ENCODE measurements at regions of chr7 and their contacts with region 1.

Region 1: DNA sequence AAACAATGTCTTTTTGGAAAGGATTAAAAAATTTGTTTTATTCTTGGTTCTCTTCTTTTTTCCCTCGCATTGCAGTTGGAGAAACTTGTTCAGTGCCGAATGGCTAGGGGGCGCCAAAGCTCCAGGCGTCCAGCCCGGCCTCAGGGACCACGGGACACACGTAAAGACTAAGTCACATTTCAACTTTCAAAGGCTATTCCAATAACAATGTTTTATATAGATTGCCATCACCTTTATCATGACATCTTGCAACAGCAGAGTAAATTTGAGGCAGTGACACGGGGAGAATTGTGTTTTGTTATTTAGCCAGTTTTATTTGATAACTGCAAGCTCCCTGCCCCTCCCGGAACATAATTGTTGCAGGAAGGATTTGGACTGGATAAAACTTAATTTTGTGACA is 2.2 kb upstream of the IGFBP3 start:
- DNase-seq: no peak
- H3K4me3 ChIP-seq: no peak overlapping the region
- H3K27me3 ChIP-seq: no peaks in the 10 kb centered on the region
- CTCF ChIP-seq: peak; percentile 97

Region 2: DNA sequence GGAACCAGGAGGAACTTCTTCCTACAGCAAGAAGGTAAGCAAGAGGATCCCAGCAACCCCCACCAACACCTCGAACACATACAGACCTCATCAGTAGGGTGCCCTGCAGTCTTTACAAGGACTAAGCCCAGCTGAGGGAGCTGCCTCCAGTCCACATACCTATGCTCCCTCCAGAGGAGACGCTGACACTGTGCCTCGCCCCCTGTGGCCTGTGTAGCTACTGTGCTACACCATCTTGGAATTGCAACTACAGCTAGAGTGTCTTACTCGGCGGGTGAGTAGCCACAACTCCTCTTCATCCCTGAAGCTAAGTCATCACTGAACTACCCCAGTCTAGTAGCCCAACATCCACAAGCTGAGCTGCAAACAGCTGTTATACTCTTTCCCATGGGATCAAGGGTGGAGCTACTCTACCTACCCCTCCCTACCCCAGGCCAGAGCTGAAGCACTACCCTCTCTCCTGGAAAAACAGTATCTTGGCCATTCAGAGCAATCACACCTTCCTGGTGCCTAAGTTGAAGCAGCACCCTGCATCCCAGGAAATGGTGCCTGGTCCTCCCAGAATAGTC is 1555.7 kb before region 1 on chr7:
- CTCF ChIA-PET with region 1: no interaction called
- POLR2A ChIA-PET with region 1: no interaction called
- DNase-seq: no peak
- H3K4me3 ChIP-seq: no peak overlapping the region
- H3K27me3 ChIP-seq: no peaks in the 10 kb centered on the region
- CTCF ChIP-seq: no peak

Region 3: GRCh38 chr7:45938626-45939302 is 15.5 kb after region 1 on chr7:
- CTCF ChIA-PET with region 1: interaction called, 18 read pairs
- POLR2A ChIA-PET with region 1: no interaction called
- DNase-seq: no peak
- H3K4me3 ChIP-seq: no peak overlapping the region
- H3K27me3 ChIP-seq: no peaks in the 10 kb centered on the region
- CTCF ChIP-seq: no peak

Region 4: DNA sequence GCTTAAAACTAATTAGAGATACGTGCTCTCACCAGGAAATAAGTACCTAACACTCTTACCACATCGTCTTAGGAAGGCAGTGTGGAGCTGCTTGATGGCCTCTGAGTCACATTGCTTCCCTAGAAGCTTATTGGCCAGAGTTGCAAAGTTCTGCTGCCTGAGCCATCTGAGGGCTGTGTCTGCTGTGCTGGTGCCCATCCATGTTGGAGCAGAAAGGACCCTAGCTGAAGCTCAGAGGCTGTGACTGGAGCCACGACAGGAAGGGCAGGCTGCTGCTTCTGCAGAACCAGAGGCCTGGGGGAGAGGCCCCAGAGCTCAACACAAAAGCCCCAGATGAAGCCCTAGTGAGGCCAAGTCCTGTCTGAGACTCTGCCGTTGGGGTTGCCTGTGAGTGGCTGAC is 62.6 kb after region 1 on chr7:
- CTCF ChIA-PET with region 1: interaction called, 15 read pairs
- POLR2A ChIA-PET with region 1: no interaction called
- DNase-seq: no peak
- H3K4me3 ChIP-seq: no peak overlapping the region
- H3K27me3 ChIP-seq: no peaks in the 10 kb centered on the region
- CTCF ChIP-seq: no peak

Region 5: DNA sequence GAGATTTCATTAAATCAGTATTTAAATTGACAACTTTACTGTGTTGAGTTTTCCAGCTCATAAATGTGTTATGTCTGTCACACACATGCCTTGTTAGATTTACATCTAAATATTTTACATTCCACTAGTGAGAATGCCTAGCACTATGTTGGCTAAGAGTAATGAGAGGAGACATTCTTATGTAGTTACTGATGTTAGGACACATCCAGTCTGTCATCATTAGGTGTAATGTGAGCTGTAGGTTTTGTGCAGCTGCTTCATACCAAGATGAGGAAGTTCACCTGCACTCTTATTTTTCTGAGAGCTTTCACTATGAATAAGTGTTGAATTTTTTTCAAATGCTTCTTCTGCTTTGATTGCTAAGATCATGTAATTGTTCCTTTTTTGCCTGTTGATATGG is 215.8 kb after region 1 on chr7:
- CTCF ChIA-PET with region 1: interaction called, 19 read pairs
- POLR2A ChIA-PET with region 1: no interaction called
- DNase-seq: peak; percentile 66
- H3K4me3 ChIP-seq: no peak overlapping the region
- H3K27me3 ChIP-seq: no peaks in the 10 kb centered on the region
- CTCF ChIP-seq: no peak

Region 6: DNA sequence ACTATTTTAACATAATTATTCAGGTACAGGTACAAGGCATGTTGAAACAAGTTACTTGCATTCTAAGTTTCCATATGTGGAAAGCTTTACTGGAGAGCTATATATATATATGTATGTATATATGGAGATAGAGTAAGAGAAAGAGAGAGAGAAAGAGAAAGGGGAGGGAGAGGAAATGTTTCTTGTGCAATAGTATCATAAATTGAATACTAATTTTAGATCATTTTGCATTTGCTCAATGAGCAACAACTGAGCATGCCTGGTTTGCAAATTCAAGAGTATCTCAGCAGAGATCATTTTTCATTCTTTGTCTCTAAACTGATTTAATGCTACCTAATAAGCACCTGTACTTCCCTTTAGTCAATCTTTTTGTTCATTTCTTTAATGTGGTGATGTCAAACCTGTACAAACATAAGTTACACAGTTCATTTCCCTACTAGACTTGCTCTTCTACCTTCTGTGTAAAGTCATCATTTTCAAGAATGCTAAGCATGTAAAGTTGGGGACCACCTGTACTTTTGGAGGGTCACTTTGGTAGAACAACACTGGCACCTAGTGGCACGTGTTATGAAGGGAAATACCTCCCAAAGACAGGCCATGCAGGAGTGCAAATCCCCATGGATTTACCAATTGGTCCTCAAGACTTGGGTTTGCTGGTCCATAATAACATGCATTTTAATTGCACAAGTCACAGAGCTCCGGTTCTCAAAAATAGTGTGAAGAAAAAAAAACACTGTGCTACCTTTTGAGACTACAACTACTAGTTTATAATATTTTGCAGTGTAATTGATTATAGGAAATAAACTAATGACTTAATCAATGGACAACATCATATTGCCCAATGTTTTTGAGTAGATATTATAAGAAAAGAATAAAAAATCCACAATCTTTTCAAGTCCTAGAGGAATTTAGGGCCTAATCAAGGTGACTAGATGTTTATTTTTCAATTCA is 429.0 kb after region 1 on chr7:
- CTCF ChIA-PET with region 1: interaction called, 61 read pairs
- POLR2A ChIA-PET with region 1: no interaction called
- DNase-seq: peak; percentile 12
- H3K4me3 ChIP-seq: no peak overlapping the region
- H3K27me3 ChIP-seq: no peaks in the 10 kb centered on the region
- CTCF ChIP-seq: peak; percentile 62

Region 7: DNA sequence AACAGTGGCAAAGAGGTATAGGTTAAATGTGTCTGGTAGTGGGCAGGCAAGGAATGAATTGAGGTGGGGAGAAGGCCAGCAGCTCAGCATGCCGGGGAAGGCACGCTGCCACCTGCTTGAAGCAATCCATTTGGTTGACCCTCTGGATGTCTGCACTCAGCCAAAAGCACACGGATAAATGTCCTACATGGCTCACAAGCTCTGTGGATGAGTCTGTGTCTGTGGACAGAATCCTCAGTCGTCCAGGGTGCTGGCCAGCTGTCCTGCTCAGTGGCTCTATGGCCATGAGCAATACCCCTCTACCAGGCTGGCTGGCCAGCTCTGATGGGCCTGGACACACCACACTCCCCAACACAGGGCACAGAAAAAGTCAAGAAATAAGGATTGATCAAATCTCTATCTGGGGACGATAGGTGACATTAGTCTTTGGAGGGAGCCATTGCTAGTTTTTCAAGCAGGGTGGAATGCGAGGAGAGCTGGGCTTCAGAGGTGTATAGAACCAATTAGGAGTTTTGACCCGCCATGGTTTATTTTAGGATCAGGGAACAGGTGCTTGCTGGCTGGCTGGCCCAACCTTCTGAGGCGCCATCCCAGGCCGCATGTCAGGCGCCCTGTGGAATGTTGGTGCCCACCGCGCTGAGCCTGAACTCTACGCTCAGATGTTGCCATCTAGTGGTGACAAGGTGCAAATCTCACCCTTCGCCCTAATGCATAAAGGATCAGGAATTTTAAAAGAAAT is 1165.2 kb after region 1 on chr7:
- CTCF ChIA-PET with region 1: interaction called, 72 read pairs
- POLR2A ChIA-PET with region 1: no interaction called
- DNase-seq: no peak
- H3K4me3 ChIP-seq: no peak overlapping the region
- H3K27me3 ChIP-seq: no peaks in the 10 kb centered on the region
- CTCF ChIP-seq: peak; percentile 84

Region 8: GRCh38 chr7:47483604-47484273 is 1560.4 kb after region 1 on chr7:
- CTCF ChIA-PET with region 1: no interaction called
- POLR2A ChIA-PET with region 1: interaction called, 11 read pairs
- DNase-seq: no peak
- H3K4me3 ChIP-seq: no peak overlapping the region
- H3K27me3 ChIP-seq: no peaks in the 10 kb centered on the region
- CTCF ChIP-seq: peak; percentile 18; the same call in 1 of the 2 replicates